CD4-positive, alpha-beta T cell (primary cell): ENCODE measurements at regions of chr3 and their contacts with region 1.

Region 1: GRCh38 chr3:153595186-153595815 is 433.3 kb downstream of the RAP2B start:
- DNase-seq: peak in 3 of 14 experiments; percentile 35 to 40 (median 38)
- ATAC-seq: no peak
- H3K4me3 ChIP-seq: no peak overlapping the region
- H3K4me3 Mint-ChIP-seq: no peak overlapping the region
- H3K27ac ChIP-seq: no peak overlapping the region
- H3K27ac Mint-ChIP-seq: no peak overlapping the region
- H3K4me1 ChIP-seq: no peaks in the 10 kb centered on the region
- H3K4me1 Mint-ChIP-seq: peaks cover 10% of the 10 kb centered on the region
- H3K27me3 ChIP-seq: no peaks in the 10 kb centered on the region
- H3K27me3 Mint-ChIP-seq: no peaks in the 10 kb centered on the region
- CTCF ChIP-seq: peak; percentile 65

Region 2: GRCh38 chr3:153043729-153044328 is 551.5 kb before region 1 on chr3:
- CTCF ChIA-PET with region 1: no interaction called
- POLR2A ChIA-PET with region 1: interaction called, 3 read pairs
- intact Hi-C with region 1: loop called (anchors 1 to 2 kb)
- DNase-seq: no peak
- ATAC-seq: no peak
- H3K4me3 ChIP-seq: no peak overlapping the region
- H3K4me3 Mint-ChIP-seq: no peak overlapping the region
- H3K27ac ChIP-seq: no peak overlapping the region
- H3K27ac Mint-ChIP-seq: no peak overlapping the region
- H3K4me1 ChIP-seq: no peaks in the 10 kb centered on the region
- H3K4me1 Mint-ChIP-seq: peaks cover 5% of the 10 kb centered on the region
- H3K27me3 ChIP-seq: no peaks in the 10 kb centered on the region
- H3K27me3 Mint-ChIP-seq: no peaks in the 10 kb centered on the region
- CTCF ChIP-seq: no peak